Mammary epithelial cell (primary cell): ENCODE measurements at regions of chr17 and their contacts with region 1.

Region 1: DNA sequence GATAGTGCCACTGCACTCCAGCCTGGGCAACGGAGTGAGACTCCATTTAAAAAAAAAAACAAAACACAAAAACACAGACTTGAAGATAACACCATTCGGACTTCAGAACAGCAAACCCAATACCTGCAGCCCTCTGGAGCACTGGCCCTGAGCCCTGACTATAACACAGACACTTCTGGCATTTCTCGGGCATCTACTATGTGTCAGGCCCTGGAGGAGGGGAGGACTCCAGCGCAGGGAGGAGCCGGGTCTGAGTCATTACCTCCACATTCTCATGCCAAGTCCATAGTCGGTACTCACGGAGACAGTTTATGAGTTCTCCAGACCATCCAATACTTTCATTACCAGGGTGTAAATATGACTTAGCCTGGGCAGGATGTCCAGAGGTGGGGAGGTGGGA is 48.8 kb downstream of the PITPNM3 start:
- DNase-seq: peak; percentile 86
- H3K4me3 ChIP-seq: no peak overlapping the region
- H3K27ac ChIP-seq: no peak overlapping the region
- H3K4me1 ChIP-seq: peaks cover 30% of the 10 kb centered on the region
- H3K27me3 ChIP-seq: no peaks in the 10 kb centered on the region
- CTCF ChIP-seq: no peak

Region 2: DNA sequence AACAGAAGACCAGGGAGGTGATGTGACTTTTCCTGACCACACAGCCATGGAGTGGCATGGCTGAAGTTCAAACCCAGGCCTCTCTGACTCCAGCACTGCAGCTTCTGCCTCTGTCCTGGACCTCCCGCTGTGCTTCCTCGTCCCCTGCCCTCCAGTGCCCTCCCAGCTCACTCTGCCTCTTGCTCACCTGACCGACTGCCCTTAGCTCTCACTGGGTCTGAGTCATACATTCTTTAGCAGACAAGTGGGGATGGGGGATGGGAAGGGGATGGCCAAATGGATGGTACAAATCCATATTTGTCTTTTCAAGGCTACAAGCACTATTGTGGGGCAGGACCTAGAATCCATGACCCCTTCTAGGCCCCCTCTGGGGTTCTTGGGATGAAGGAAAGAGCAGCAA is 15.8 kb after region 1 on chr17:
- CTCF ChIA-PET with region 1: no interaction called
- dilution Hi-C with region 1: no loop called
- in situ Hi-C with region 1: no loop called
- intact Hi-C with region 1: loop called (anchors 2 kb)
- DNase-seq: peak; percentile 48
- H3K4me3 ChIP-seq: no peak overlapping the region
- H3K27ac ChIP-seq: no peak overlapping the region
- H3K4me1 ChIP-seq: peaks cover 18% of the 10 kb centered on the region
- H3K27me3 ChIP-seq: no peaks in the 10 kb centered on the region
- CTCF ChIP-seq: no peak

Region 3: DNA sequence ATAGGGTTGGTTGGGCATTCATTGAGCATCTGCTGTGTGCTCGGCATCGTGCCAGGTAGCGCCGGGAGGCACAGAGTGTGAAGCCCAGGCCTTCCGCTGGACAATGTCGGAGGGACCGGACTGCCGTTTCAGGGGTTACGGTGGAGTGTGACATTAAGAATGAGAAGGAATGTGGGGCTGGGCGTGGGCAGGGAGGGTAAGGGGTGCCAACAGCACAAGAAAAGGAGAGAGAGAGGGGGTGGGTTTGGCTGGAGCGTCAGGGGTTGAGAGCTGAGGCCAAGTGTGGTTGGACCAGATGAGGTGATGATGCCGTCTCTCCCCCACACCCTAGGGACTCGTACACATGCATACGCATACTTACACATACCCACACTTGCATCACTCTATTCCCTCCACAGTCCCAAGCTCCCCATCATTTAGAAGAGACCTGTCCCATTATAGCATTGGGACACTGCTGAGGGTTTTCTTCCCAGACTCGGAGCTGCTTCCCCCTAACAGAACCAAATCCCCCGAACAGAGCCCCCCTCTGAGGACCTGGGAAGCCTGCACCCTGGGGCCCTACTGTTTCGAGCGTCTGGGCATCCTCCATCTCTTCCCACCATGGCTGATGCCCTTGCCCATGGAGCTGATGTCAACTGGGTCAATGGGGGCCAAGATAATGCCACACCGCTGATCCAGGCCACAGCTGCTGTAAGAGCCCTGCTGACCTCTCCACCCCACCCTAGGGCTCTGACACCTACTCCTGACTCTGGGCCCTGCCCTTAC is 841.1 kb after region 1 on chr17:
- CTCF ChIA-PET with region 1: no interaction called
- dilution Hi-C with region 1: no loop called
- in situ Hi-C with region 1: no loop called
- intact Hi-C with region 1: no loop called
- DNase-seq: no peak
- H3K4me3 ChIP-seq: no peak overlapping the region
- H3K27ac ChIP-seq: no peak overlapping the region
- H3K4me1 ChIP-seq: peaks cover 23% of the 10 kb centered on the region
- H3K27me3 ChIP-seq: no peaks in the 10 kb centered on the region
- CTCF ChIP-seq: no peak